Activated CD8-positive, alpha-beta T cell treated with anti-CD3 and anti-CD28 coated beads, Interleukin-2, amount 10 ng/mL, durations not matched to agents 7 days and 5 days (primary cell): ENCODE measurements at regions of chr10 and their contacts with region 1.

Region 1: GRCh38 chr10:22682237-22683139 is 31.9 kb downstream of the PIP4K2A start:
- DNase-seq: peak; percentile 86
- ATAC-seq: peak; percentile 67
- H3K4me3 Mint-ChIP-seq: peak overlapping the region; percentile 61
- H3K27ac Mint-ChIP-seq: peak overlapping the region; percentile 99
- H3K4me1 Mint-ChIP-seq: peaks cover 87% of the 10 kb centered on the region
- H3K27me3 Mint-ChIP-seq: no peaks in the 10 kb centered on the region

Region 2: DNA sequence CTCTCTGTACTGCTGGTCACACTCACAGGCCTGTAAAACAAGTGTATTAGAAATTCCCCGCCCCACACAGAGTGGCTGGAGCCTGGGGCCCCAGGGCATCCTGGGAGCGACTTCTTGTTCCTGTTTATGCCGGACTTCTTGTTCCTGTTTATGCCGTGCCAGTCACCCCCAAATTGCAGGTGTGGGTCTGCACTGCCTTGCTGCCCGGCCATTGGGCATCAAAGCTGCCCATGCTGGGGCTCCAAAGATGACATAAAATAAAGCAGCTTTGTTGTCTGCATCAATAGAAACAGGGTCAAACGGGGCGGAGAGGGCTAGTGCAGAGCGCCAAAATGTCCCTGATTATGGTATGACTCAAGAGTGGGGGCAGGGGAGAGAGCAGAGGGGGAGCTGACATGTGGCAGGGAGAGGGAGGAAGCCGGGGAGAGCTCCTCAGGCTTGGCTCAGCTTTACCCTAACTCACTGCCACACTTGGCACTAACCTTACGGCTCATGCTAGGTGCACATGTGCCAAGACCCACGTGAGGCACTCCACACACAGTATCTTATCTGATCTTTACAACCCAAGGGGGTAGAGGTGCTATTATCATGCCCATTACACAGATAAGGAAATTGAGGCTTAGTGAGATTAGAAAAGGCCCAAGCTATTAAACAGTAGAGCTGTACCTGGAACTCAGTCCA is 66.5 kb before region 1 on chr10:
- CTCF ChIA-PET with region 1: interaction called, 4 read pairs
- POLR2A ChIA-PET with region 1: interaction called, 13 read pairs
- DNase-seq: no peak
- ATAC-seq: peak; percentile 20
- H3K4me3 Mint-ChIP-seq: peak overlapping the region; percentile 67
- H3K27ac Mint-ChIP-seq: peak overlapping the region; percentile 70
- H3K4me1 Mint-ChIP-seq: peaks cover 96% of the 10 kb centered on the region
- H3K27me3 Mint-ChIP-seq: no peaks in the 10 kb centered on the region

Region 3: DNA sequence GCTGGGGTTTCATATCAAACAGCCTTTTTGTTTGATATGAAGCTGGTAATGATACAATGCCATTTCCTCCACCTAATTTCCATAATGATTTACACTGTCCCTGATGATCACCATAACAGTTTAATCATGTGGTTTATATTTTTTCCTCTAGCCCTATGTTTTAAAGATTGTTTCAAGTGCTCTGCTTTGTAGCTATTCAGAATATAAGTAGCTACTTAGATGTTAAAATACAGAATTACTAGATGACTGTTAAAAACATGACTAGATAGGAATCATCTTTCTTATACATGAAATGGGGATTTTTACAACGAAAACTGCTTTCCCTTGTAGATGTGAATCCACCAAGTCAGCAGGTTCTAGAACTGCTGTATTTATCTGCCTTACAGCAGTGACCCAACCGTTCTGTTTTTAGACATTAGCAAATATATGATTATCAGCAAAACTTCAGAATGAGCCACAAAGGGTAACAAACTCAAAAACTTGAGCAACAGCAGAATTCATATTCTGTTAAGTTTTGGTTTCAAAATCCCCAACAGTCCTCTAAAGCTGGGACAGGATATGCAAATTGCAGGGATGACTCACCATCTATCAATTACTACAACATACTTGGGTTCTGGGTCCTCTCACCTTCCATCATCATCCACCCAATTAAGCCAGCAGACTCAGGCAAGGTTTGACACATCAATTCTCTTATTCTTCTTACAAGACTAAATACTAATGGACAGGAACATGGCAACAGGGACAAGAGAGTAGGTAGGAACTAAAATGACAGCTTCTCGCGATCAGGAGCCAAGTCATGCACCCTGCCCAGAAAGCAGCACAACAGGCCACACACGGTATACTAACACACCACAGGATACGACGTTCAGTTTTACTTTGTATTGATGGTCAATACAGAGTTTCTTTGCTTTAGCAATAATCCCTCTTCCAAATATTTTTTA is 52.0 kb before region 1 on chr10:
- CTCF ChIA-PET with region 1: interaction called, 5 read pairs
- POLR2A ChIA-PET with region 1: interaction called, 17 read pairs
- DNase-seq: peak; percentile 56
- ATAC-seq: peak; percentile 87
- H3K4me3 Mint-ChIP-seq: peak overlapping the region; percentile 78
- H3K27ac Mint-ChIP-seq: peak overlapping the region; percentile 96
- H3K4me1 Mint-ChIP-seq: peaks cover 92% of the 10 kb centered on the region
- H3K27me3 Mint-ChIP-seq: no peaks in the 10 kb centered on the region

Region 4: GRCh38 chr10:22648547-22648961 is 33.9 kb before region 1 on chr10:
- CTCF ChIA-PET with region 1: interaction called, 5 read pairs
- POLR2A ChIA-PET with region 1: interaction called, 21 read pairs
- DNase-seq: no peak
- ATAC-seq: no peak
- H3K4me3 Mint-ChIP-seq: peak overlapping the region; percentile 71
- H3K27ac Mint-ChIP-seq: peak overlapping the region; percentile 79
- H3K4me1 Mint-ChIP-seq: peaks cover 95% of the 10 kb centered on the region
- H3K27me3 Mint-ChIP-seq: no peaks in the 10 kb centered on the region

Region 5: GRCh38 chr10:22655311-22655981 is 27.0 kb before region 1 on chr10:
- CTCF ChIA-PET with region 1: interaction called, 8 read pairs
- POLR2A ChIA-PET with region 1: interaction called, 21 read pairs
- DNase-seq: peak; percentile 41
- ATAC-seq: peak; percentile 42
- H3K4me3 Mint-ChIP-seq: peak overlapping the region; percentile 64
- H3K27ac Mint-ChIP-seq: peak overlapping the region; percentile 91
- H3K4me1 Mint-ChIP-seq: peaks cover 96% of the 10 kb centered on the region
- H3K27me3 Mint-ChIP-seq: no peaks in the 10 kb centered on the region

Region 6: DNA sequence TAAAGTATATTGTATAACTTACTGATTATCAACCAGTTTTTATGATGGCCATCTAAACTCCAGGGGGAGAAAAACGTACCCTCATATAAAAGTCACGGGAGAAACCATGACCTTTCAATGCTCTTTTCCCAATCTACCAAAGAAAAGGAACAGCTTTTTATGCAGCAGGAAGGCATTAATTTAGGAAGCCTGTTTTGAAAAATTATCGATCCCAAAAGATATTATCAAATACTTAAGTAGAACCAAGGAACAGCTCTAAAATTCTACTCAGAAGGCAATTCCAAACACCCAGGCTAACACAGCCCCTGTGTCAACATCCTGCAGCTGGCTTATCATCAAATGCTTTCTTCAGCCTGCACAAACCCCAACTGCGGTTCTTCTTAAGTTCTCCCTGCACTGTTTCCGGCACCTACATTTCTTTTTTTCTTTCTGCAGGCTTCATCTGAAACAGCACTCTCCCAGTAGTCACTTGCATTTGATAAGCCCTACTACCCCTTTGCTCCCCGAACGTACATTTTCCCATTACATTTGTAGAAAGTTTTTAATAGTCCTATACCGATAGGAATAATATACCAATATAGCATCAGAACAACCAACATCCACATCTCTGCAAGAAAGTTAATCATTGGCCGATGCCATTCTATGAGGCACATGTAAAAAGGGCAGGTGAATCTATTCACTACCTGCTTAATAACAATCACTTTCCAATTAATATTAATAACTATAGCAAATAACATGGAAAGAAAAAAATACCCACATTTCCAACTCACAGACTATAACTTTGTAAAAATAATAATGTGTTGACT is 16.0 kb before region 1 on chr10:
- CTCF ChIA-PET with region 1: interaction called, 11 read pairs
- POLR2A ChIA-PET with region 1: interaction called, 15 read pairs
- DNase-seq: peak; percentile 81
- ATAC-seq: peak; percentile 93
- H3K4me3 Mint-ChIP-seq: peak overlapping the region; percentile 82
- H3K27ac Mint-ChIP-seq: peak overlapping the region; percentile 94
- H3K4me1 Mint-ChIP-seq: peaks cover 84% of the 10 kb centered on the region
- H3K27me3 Mint-ChIP-seq: no peaks in the 10 kb centered on the region

Region 7: DNA sequence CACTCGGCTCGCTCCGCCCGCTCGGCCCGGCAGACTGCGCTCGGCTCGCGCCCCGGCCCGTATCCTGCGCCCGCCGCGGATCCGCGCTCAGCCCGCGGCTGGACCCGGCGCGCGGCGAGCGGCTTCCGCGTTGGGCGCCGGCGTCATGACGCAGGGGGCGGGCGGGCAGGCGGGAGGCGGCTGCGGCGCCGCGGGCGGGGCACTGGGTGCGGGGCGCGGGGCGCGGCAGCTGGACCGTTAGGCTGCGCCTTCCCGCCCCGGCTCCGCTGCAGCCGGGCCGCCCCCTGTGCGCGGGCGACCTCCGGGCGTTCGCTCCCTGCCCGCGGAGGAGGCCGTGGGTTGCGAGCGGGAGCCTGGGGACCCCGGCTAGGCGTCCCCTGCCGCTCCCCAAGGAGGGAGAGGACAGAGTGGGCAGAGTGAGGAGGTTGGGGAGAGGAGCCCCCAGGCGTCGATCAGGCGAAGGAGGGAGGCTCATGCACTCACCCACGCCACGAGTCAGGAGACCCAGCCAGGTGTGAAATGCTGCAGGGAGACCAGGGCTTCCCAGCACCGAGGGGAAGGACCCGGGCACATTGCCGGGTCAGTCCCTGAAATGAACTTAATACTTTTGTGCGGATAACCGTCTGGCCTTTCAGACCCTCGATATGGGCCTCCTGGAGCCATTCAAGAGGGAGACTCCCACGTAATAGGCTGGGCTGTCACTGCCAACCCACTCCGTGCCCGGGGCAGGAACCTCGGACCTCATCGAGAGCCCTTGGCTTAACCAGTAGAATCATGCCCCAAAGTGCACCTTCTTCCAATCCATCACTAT is 32.2 kb after region 1 on chr10 and contains the start of gene PIP4K2A:
- CTCF ChIA-PET with region 1: interaction called, 4 read pairs
- POLR2A ChIA-PET with region 1: interaction called, 35 read pairs
- DNase-seq: peak; percentile 79
- ATAC-seq: peak; percentile 89
- H3K4me3 Mint-ChIP-seq: peak within 1 kb of the TSS; percentile 88
- H3K27ac Mint-ChIP-seq: peak within 1 kb of the TSS; percentile 86
- H3K4me1 Mint-ChIP-seq: peaks cover 33% of the 10 kb centered on the region
- H3K27me3 Mint-ChIP-seq: no peaks in the 10 kb centered on the region
- total RNA-seq, gene PIP4K2A: 154 to 164 TPM